Activated CD4-positive, alpha-beta T cell treated with anti-CD3 and anti-CD28 coated beads for 36 hours (primary cell): ENCODE measurements at regions of chr19 and their contacts with region 1.

Region 1: DNA sequence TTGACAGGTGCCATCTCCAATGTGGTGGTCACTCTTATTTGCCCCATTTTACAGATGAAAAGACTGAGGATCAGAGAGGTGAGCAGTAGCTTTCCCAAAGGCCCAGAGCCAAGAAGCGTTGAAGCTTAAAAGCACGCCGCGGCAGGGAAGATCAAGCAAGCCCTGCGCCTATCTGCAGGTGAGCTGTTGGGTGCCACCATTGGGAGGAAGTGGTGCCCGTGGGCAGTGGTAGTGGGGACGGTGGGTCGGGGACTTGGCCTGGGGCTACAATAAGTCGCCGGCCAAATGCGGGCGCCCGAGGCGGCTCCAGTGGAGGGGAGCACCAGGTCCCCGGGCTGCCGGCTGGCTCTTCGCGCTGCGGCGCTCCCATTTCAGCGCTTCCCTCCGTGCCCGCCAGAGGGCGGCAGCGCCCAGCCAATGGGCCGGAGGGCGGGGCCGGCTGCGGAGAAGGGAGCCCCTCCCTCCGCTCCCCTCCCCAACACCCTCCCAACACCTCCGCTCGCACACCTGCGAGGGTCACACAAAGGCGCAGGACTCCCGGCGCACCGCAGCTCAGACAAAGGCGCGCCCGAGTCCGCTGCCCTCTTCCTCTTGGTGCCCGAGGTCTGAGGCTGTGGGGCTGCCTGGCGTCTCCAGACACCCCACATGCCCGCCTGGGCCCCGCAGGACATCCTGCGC is 744 bp upstream of the POU2F2 start:
- DNase-seq: peak; percentile 90
- ATAC-seq: peak; percentile 59
- H3K4me3 Mint-ChIP-seq: peak overlapping the region; percentile 81
- H3K27ac Mint-ChIP-seq: peak overlapping the region; percentile 84
- H3K4me1 Mint-ChIP-seq: peaks cover 56% of the 10 kb centered on the region
- H3K27me3 Mint-ChIP-seq: no peaks in the 10 kb centered on the region

Region 2: GRCh38 chr19:42108527-42109389 is 24.2 kb before region 1 on chr19:
- CTCF ChIA-PET with region 1: interaction called, 20 read pairs
- POLR2A ChIA-PET with region 1: no interaction called
- intact Hi-C with region 1: loop called (anchors 1 kb)
- DNase-seq: peak; percentile 95
- ATAC-seq: peak; percentile 95
- H3K4me3 Mint-ChIP-seq: no peak overlapping the region
- H3K27ac Mint-ChIP-seq: no peak overlapping the region
- H3K4me1 Mint-ChIP-seq: peaks cover 48% of the 10 kb centered on the region
- H3K27me3 Mint-ChIP-seq: no peaks in the 10 kb centered on the region

Region 3: GRCh38 chr19:42176990-42177685 is 44.1 kb after region 1 on chr19:
- CTCF ChIA-PET with region 1: interaction called, 27 read pairs
- POLR2A ChIA-PET with region 1: no interaction called
- intact Hi-C with region 1: loop called in 1 of 2 experiments (anchors 1 kb)
- DNase-seq: peak; percentile 88
- ATAC-seq: peak; percentile 95
- H3K4me3 Mint-ChIP-seq: no peak overlapping the region
- H3K27ac Mint-ChIP-seq: no peak overlapping the region
- H3K4me1 Mint-ChIP-seq: peaks cover 15% of the 10 kb centered on the region
- H3K27me3 Mint-ChIP-seq: peaks cover 24% of the 10 kb centered on the region

Region 4: DNA sequence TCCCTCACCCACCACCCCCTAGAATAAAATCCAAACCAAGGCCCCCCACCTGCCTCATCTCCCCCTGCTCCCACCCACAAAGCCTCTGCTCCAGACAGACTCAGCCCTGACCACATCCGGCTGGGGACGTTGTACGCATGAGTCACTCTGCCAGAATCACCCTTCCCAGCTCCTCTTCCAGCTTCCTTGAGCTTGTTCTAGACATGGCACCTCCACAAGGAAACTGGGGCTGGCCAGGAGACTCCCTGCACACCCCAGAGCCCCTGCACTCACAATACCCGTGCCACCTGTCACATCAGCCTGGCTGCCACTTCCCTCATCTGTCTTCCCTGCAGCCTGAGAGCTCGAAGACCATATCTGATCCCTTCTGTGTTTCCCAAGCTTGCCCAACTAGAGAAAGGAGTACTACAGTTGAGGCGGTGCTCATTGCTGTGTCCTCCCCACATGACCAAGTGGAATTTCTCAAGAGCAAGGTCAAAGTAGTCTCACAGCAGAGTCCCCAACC is 74.8 kb after region 1 on chr19:
- CTCF ChIA-PET with region 1: no interaction called
- POLR2A ChIA-PET with region 1: no interaction called
- intact Hi-C with region 1: no loop called
- DNase-seq: no peak
- ATAC-seq: peak; percentile 61
- H3K4me3 Mint-ChIP-seq: no peak overlapping the region
- H3K27ac Mint-ChIP-seq: peak overlapping the region; percentile 74
- H3K4me1 Mint-ChIP-seq: peaks cover 50% of the 10 kb centered on the region
- H3K27me3 Mint-ChIP-seq: no peaks in the 10 kb centered on the region

Region 5: GRCh38 chr19:42244347-42245220 is 111.6 kb after region 1 on chr19:
- CTCF ChIA-PET with region 1: interaction called, 9 read pairs
- POLR2A ChIA-PET with region 1: no interaction called
- intact Hi-C with region 1: loop called (anchors 1 to 2 kb)
- DNase-seq: peak; percentile 96
- ATAC-seq: peak; percentile 49
- H3K4me3 Mint-ChIP-seq: peak overlapping the region; percentile 93
- H3K27ac Mint-ChIP-seq: peak overlapping the region; percentile 94
- H3K4me1 Mint-ChIP-seq: peaks cover 42% of the 10 kb centered on the region
- H3K27me3 Mint-ChIP-seq: no peaks in the 10 kb centered on the region

Region 6: DNA sequence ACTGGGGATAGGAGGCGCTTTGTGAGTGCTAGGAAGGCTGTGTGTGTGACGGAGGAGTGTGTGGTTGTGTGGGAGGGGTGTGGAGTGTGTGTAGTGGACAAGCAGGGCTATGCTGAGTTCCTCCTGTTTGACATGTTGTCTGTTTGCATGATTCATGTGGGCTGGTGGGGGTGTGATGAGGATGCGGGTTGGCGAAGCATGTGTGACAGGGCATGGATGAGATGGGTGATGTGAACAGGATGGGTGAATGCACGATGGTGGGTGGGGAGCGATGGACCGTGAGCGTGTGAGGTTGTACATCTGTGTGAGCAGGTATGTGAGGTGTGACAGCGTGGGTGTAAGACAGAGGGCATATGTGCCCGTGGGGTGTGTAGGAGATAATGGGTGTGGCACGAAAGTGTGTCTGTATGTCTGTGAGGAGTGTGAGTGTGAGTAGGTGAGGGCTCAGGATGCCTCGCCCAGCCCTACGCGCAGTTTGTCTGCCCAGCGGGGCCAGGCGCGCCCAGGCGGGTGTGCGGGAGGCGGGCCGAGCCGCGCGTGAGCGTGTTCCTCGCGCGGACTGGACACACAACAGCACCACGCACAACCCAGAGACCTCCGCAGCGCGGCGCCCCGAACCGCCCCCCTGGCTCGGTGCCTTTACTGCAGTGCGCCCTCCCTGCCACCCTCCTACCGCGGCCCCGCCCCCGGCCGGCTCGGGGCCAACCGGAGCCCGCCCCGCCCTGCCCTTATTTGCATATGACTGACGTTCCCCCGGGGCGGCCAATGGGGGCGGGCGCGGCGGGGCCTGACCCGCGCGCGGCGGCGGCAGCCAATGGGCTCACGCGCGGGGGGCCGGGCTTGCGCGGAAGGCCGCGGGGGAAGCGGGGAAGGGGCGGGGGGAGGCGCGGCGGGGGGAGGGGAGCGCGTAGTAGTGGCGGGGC is 150.4 kb after region 1 on chr19:
- CTCF ChIA-PET with region 1: interaction called, 8 read pairs
- POLR2A ChIA-PET with region 1: no interaction called
- intact Hi-C with region 1: loop called (anchors 1 to 2 kb)
- DNase-seq: peak; percentile 98
- ATAC-seq: peak; percentile 62
- H3K4me3 Mint-ChIP-seq: no peak overlapping the region
- H3K27ac Mint-ChIP-seq: no peak overlapping the region
- H3K4me1 Mint-ChIP-seq: peaks cover 41% of the 10 kb centered on the region
- H3K27me3 Mint-ChIP-seq: no peaks in the 10 kb centered on the region

Region 7: GRCh38 chr19:42325273-42325895 is 192.4 kb after region 1 on chr19 and contains the start of gene MEGF8:
- CTCF ChIA-PET with region 1: interaction called, 5 read pairs
- POLR2A ChIA-PET with region 1: no interaction called
- intact Hi-C with region 1: loop called (anchors 1 kb)
- DNase-seq: peak; percentile 99
- ATAC-seq: peak; percentile 98
- H3K4me3 Mint-ChIP-seq: peak within 1 kb of the TSS; percentile 80
- H3K27ac Mint-ChIP-seq: peak within 1 kb of the TSS; percentile 69
- H3K4me1 Mint-ChIP-seq: peaks cover 12% of the 10 kb centered on the region
- H3K27me3 Mint-ChIP-seq: peaks cover 12% of the 10 kb centered on the region
- total RNA-seq, gene MEGF8: 5.2 to 5.3 TPM

Region 8: GRCh38 chr19:42423462-42424344 is 290.7 kb after region 1 on chr19:
- CTCF ChIA-PET with region 1: no interaction called
- POLR2A ChIA-PET with region 1: no interaction called
- intact Hi-C with region 1: loop called in 1 of 2 experiments (anchors 1 kb)
- DNase-seq: peak; percentile 96
- ATAC-seq: peak; percentile 91
- H3K4me3 Mint-ChIP-seq: peak overlapping the region; percentile 86
- H3K27ac Mint-ChIP-seq: peak overlapping the region; percentile 92
- H3K4me1 Mint-ChIP-seq: peaks cover 40% of the 10 kb centered on the region
- H3K27me3 Mint-ChIP-seq: no peaks in the 10 kb centered on the region